CD4-positive, alpha-beta T cell (primary cell): ENCODE measurements at regions of chr11 and their contacts with region 1.

Region 1: DNA sequence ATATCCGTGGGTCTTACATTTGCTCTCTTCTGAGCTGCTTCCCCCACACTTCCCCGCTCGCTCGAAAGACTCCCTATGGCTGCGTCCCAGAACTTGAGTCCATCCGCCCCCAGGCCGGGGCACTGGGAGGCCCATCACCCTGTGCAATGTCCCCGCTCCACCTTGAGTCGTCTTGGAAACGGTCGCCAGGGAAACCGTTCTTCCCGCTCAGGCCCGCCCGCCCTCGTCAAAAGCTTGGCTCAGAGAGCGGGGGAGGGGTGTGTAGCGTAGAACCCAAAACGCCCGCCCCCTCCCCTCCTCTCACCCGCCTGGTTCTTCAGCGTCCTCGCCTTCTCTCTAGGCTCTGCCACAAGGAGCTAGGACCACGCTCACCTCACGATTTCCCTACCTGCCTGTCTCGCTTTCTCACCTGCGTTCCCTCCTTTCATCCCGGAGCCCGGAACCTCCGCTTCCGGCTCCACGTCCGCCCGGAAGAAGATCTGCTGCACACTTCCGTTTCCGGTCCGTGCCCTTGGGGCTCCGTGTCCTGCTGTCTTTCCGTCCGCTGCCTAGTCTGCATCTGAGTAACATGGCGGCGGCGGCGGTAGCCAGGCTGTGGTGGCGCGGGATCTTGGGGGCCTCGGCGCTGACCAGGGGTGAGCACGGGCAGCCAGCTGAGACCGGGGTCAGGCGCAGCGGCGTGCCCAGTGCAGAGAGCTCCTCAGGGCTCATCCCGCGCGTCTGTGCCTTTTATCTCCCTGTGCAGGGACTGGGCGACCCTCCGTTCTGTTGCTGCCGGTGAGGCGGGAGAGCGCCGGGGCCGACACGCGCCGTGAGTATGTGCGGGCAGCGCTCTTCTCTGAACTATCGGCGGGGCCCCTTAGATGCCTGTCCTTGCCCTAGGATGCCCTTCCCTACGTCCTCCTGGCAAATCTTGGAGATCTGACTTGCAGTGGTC is at the starts of genes KBTBD4 and NDUFS3:
- DNase-seq: peak; percentile 81 to 95 (median 85)
- ATAC-seq: peak; percentile 91
- H3K4me3 ChIP-seq: peak within 1 kb of the TSS; percentile 90
- H3K4me3 Mint-ChIP-seq: peak within 1 kb of the TSS; percentile 99
- H3K27ac ChIP-seq: peak within 1 kb of the TSS; percentile 76 to 81
- H3K27ac Mint-ChIP-seq: peak within 1 kb of the TSS; percentile 91
- H3K4me1 ChIP-seq: peaks cover 38% of the 10 kb centered on the region
- H3K4me1 Mint-ChIP-seq: peaks cover 41% of the 10 kb centered on the region
- H3K27me3 ChIP-seq: no peaks in the 10 kb centered on the region
- H3K27me3 Mint-ChIP-seq: no peaks in the 10 kb centered on the region
- CTCF ChIP-seq: no peak
- total RNA-seq, gene KBTBD4: 29.1 to 30.2 TPM
- total RNA-seq, gene NDUFS3: 139 to 144 TPM

Region 2: GRCh38 chr11:47565340-47566148 is 13.2 kb before region 1 on chr11 and contains the start of gene PTPMT1:
- CTCF ChIA-PET with region 1: interaction called, 3 read pairs
- POLR2A ChIA-PET with region 1: interaction called, 26 read pairs
- intact Hi-C with region 1: no loop called
- DNase-seq: peak; percentile 34 to 81 (median 58)
- ATAC-seq: peak; percentile 88
- H3K4me3 ChIP-seq: peak within 1 kb of the TSS; percentile 86
- H3K4me3 Mint-ChIP-seq: peak within 1 kb of the TSS; percentile 87
- H3K27ac ChIP-seq: peak within 1 kb of the TSS; percentile 41 to 83
- H3K27ac Mint-ChIP-seq: peak within 1 kb of the TSS; percentile 80
- H3K4me1 ChIP-seq: peaks cover 25% of the 10 kb centered on the region
- H3K4me1 Mint-ChIP-seq: peaks cover 20% of the 10 kb centered on the region
- H3K27me3 ChIP-seq: no peaks in the 10 kb centered on the region
- H3K27me3 Mint-ChIP-seq: no peaks in the 10 kb centered on the region
- CTCF ChIP-seq: no peak
- total RNA-seq, gene PTPMT1: 18.9 to 26.7 TPM

Region 3: DNA sequence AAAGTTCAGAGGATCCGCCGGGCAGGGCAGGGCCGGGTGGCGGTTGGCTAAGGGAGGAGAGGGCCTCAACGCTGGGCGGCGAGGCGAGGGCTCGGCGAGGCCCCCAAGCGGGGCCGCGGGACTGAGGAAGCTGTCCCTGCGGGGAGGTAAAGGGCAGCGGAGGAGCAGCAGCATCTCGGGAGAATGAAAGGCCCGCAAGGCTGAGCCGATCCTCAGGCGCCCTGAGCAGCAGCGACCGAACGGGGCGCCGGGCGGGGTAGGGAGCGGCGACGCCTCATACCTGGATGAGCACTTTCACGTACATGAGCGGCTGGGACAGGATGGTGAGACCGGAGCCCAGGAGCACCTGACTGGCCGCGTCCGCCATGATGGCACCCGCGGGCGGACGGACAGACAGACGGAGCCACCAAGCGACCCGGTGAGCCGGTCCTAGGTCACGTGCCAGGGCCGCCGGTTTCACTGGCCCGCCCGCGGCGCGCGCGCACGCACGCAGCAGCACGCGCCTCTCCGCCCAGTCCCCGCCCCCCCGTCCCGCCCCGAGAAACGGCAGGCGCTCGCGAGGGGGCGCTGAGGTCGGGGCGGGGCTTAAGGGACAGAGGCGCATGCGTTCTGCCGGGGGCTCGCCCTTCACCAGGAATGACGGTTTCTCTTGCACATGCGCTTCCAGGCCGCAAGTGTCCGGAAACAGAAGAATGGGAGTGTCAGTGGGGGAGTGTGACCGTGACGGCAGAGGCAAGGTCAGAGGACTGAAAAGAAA is 63.5 kb after region 1 on chr11 and contains the start of gene MTCH2:
- CTCF ChIA-PET with region 1: no interaction called
- POLR2A ChIA-PET with region 1: no interaction called
- intact Hi-C with region 1: loop called in 1 of 2 experiments (anchors 2 kb)
- DNase-seq: peak; percentile 91 to 99 (median 95)
- ATAC-seq: peak; percentile 92
- H3K4me3 ChIP-seq: peak within 1 kb of the TSS; percentile 96
- H3K4me3 Mint-ChIP-seq: peak within 1 kb of the TSS; percentile 90
- H3K27ac ChIP-seq: peak within 1 kb of the TSS; percentile 88 to 91
- H3K27ac Mint-ChIP-seq: peak within 1 kb of the TSS; percentile 89
- H3K4me1 ChIP-seq: peaks cover 28% of the 10 kb centered on the region
- H3K4me1 Mint-ChIP-seq: peaks cover 26% of the 10 kb centered on the region
- H3K27me3 ChIP-seq: no peaks in the 10 kb centered on the region
- H3K27me3 Mint-ChIP-seq: no peaks in the 10 kb centered on the region
- CTCF ChIP-seq: peak; percentile 6
- total RNA-seq, gene MTCH2: 11.8 to 12.7 TPM

Region 4: DNA sequence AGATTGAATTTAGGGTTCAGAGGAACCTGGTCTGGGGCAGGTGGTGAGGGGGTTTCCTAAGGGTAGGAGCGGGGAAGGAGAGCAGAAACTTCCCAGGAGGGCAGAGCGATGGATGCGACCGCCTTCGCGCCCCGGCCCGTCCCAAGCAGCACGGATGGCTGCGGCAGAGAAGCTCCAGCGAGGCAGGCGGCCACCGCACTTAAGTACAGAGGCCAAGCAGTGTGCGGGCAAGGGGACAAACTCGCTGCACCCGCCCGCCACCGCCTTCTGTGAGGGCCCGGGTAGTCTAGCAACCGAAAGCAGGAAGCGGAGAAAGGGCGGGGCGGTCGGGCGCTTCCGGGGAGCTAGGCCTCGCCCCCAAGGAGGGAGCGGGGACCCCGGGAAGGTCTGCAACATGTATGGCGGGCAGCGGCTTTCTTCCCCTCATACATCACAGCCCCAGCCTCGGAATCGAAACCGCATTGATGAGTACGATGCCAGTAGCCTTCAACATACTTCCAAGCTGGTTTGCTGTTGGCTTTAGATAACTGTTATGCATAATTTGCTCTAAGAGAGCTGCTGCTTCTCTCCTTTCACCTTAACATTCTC is 136.4 kb after region 1 on chr11 and contains the start of gene AGBL2:
- CTCF ChIA-PET with region 1: no interaction called
- POLR2A ChIA-PET with region 1: no interaction called
- intact Hi-C with region 1: loop called in 1 of 2 experiments (anchors 5 kb)
- DNase-seq: peak; percentile 67 to 90 (median 80)
- ATAC-seq: peak; percentile 97
- H3K4me3 ChIP-seq: peak within 1 kb of the TSS; percentile 96
- H3K4me3 Mint-ChIP-seq: peak within 1 kb of the TSS; percentile 97
- H3K27ac ChIP-seq: peak within 1 kb of the TSS; percentile 91 to 94
- H3K27ac Mint-ChIP-seq: peak within 1 kb of the TSS; percentile 93
- H3K4me1 ChIP-seq: peaks cover 13% of the 10 kb centered on the region
- H3K4me1 Mint-ChIP-seq: peaks cover 19% of the 10 kb centered on the region
- H3K27me3 ChIP-seq: no peaks in the 10 kb centered on the region
- H3K27me3 Mint-ChIP-seq: no peaks in the 10 kb centered on the region
- CTCF ChIP-seq: no peak
- total RNA-seq, gene AGBL2: 3.6 to 4.4 TPM